ENCODE measurements at regions of chr3 and their contacts with region 1.

Region 1: DNA sequence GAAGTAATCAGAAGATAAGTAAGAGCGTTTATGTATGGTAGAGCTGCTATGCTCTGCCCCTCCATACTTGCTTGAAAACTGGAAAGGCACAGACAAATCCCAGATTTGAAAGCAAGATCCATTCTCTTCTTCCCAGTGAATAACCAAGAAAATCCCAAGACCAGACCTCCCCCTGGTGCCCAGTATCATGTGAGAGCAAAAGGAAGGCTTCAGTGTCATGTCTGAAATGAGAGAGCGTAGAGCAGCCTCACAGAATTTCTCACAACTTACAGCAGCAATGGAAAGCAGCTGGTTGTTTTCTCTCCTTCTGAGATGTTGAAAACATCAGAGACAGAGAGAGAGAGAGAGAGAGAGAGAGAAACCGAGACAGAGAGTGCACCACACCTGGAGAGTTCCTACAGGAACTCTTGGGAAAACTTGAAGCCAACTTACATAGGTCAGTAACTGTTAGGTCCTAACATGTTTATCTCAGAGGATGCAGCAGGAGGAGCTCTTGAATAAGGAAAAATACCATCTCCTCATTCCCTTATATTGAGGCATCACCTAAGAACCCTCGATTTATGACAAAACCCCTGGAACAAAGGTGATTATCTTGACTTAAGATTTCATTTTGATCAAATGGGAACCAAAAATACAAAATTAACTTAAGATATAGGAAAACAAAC is 273.3 kb downstream of the NSUN3 start:
- DNase-seq: peak; percentile 81
- ATAC-seq: peak; percentile 98
- H3K4me3 ChIP-seq: no peak overlapping the region
- H3K27ac ChIP-seq: no peak overlapping the region
- H3K4me1 ChIP-seq: no peaks in the 10 kb centered on the region
- H3K27me3 ChIP-seq: no peaks in the 10 kb centered on the region
- CTCF ChIP-seq: peak; percentile 81

Region 2: DNA sequence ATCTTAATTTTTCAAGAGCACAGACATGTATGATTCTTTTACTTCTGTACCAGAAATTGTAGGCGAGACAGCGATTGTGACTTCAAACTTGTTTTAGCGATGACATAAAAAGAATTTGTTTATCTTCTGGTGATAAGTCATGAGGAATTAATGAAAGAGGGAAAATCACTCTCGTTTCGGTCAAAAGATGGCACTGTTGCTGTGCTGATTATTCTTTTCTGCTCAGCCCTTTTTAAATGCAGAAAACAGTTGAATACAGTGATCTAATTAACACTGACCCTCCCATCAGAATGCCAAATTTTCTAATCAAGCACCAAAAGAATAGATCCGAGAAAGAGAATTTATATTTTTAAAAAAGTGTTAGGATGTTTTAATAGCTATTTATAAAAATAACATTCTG is 220.7 kb before region 1 on chr3:
- CTCF ChIA-PET with region 1: no interaction called
- POLR2A ChIA-PET with region 1: no interaction called
- intact Hi-C with region 1: loop called (anchors 1 kb)
- DNase-seq: peak; percentile 68
- ATAC-seq: peak; percentile 55
- H3K4me3 ChIP-seq: no peak overlapping the region
- H3K27ac ChIP-seq: no peak overlapping the region
- H3K4me1 ChIP-seq: no peaks in the 10 kb centered on the region
- H3K27me3 ChIP-seq: no peaks in the 10 kb centered on the region
- CTCF ChIP-seq: peak; percentile 83

Region 3: DNA sequence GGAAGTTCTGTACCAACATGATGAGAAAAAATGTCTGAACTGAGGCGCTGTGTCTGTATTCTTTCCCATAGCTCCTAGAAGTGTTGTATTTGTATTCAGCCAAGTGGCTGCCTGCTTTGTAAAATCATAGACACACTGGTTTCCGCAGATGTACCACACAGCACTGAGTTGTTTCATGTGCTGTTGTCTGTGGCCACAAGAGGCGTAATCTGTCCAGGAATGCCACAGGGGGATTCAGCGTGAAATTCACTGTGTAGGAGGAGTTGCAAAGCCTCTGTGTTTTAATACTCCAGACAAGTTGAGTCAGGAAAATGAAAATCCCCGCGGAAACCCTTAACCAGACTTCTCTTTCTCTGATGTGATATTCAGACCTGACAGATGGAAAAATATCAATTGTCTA is 188.9 kb after region 1 on chr3:
- CTCF ChIA-PET with region 1: interaction called, 5 read pairs
- POLR2A ChIA-PET with region 1: no interaction called
- intact Hi-C with region 1: loop called (anchors 1 kb)
- DNase-seq: peak; percentile 51
- ATAC-seq: peak; percentile 95
- H3K4me3 ChIP-seq: no peak overlapping the region
- H3K27ac ChIP-seq: no peak overlapping the region
- H3K4me1 ChIP-seq: no peaks in the 10 kb centered on the region
- H3K27me3 ChIP-seq: no peaks in the 10 kb centered on the region
- CTCF ChIP-seq: peak; percentile 73

Region 4: GRCh38 chr3:94799420-94800060 is 463.4 kb after region 1 on chr3:
- CTCF ChIA-PET with region 1: no interaction called
- POLR2A ChIA-PET with region 1: no interaction called
- intact Hi-C with region 1: loop called (anchors 2 kb)
- DNase-seq: peak; percentile 75
- ATAC-seq: peak; percentile 94
- H3K4me3 ChIP-seq: no peak overlapping the region
- H3K27ac ChIP-seq: peak overlapping the region; percentile 47
- H3K4me1 ChIP-seq: peaks cover 11% of the 10 kb centered on the region
- H3K27me3 ChIP-seq: no peaks in the 10 kb centered on the region
- CTCF ChIP-seq: no peak

Region 5: GRCh38 chr3:94875149-94875548 is 539.0 kb after region 1 on chr3:
- CTCF ChIA-PET with region 1: no interaction called
- POLR2A ChIA-PET with region 1: no interaction called
- intact Hi-C with region 1: no loop called
- DNase-seq: no peak
- ATAC-seq: no peak
- H3K4me3 ChIP-seq: no peak overlapping the region
- H3K27ac ChIP-seq: no peak overlapping the region
- H3K4me1 ChIP-seq: no peaks in the 10 kb centered on the region
- H3K27me3 ChIP-seq: no peaks in the 10 kb centered on the region
- CTCF ChIP-seq: no peak

Region 6: GRCh38 chr3:95511828-95512227 is 1175.7 kb after region 1 on chr3:
- CTCF ChIA-PET with region 1: no interaction called
- POLR2A ChIA-PET with region 1: no interaction called
- intact Hi-C with region 1: loop called (anchors 5 kb)
- DNase-seq: no peak
- ATAC-seq: no peak
- H3K4me3 ChIP-seq: no peak overlapping the region
- H3K27ac ChIP-seq: no peak overlapping the region
- H3K4me1 ChIP-seq: no peaks in the 10 kb centered on the region
- H3K27me3 ChIP-seq: no peaks in the 10 kb centered on the region
- CTCF ChIP-seq: 0 out of 2 replicates have a peak, but pooled peaks have one; percentile 11